ENCODE measurements at regions of chr9 and their contacts with region 1.

Region 1: DNA sequence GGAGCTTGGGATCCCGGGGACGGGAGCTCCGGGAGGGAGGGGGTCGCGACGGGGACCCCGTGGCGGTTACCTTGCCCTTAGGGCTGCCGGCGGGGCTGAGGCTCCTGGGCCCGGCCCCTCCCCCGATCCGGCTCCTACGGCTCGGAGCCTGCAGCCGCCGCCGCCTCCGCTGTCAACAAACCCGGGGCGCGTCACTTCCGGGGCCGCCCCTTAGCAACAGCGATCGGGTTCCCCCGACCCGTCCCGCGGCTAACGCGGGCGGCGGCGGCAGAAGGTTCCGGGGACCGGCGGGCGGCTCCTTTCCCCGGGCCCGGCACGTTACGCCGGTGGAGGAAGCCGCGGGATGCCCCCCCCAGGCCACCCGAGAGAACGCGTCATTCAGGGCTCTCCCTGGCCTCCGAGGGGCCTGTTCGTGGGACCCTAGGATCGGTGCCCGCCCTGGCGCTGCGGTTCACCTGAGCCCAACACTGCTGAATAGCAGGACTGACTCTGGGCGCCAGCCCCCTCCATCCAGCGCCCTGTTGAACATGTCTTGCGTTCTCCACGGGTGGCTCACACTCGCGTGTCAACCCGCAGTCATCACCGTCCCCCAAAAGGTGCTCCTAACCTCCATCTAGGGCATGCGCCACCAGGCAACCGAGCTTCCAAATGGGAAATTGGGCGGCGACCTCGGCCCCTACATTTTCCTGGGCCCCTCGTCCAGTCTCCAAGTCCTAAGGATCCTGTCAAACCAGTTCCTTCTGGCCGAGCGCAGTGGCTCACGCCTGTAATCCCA is at the start of gene ZER1:
- DNase-seq: peak; percentile 77 to 95
- H3K4me3 ChIP-seq: peak within 1 kb of the TSS; percentile 80
- H3K27ac ChIP-seq: peak within 1 kb of the TSS; percentile 74
- H3K4me1 ChIP-seq: peaks cover 11% of the 10 kb centered on the region; the same call in 1 of the 2 replicates
- H3K27me3 ChIP-seq: no peaks in the 10 kb centered on the region
- CTCF ChIP-seq: no peak
- total RNA-seq, gene ZER1: 65.2 and 70.0 TPM in 2 replicates

Region 2: DNA sequence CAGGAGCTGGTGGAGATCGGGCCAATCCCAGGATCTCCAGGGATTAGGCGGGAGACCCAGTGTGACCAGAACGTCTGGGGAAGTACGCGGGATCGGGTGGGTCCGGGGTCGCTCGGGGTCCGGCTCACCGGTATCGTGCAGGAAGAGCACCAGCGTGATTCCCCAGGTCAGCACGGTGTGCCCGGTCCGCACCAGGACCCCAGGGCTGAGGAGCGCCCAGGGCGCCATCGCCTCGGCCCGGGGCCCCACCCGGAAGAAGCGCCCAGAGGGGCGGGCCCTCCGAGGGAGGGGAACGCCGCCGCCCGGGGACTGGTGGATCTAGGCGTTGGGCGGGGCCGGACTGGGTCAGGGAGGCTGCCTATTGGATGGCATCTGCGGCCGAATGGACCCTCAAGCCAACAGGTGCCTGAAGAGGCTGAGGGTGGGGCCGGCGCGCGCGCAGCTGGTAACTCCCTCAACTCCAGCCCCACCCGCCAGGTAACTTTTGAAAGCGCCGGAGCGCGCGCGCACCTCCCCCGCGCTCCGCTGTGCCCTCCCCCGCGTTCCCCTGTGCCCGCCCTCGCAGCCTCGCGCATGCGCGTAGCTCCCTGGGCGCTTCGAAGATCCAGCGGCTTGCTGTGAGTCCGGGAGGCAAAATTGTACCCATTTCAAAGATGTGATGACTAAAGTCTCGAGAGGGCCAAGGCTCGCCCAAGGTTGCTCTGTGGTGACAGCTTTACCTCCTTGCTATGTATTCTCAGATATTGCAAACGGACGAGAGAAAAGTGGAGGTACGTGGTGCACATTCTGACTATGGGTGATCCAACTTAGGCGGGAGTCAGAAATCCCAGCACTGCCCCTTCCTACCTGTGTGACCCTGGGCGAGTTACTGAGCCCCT is 47.8 kb before region 1 on chr9 and contains the start of gene ZDHHC12:
- CTCF ChIA-PET with region 1: no interaction called
- POLR2A ChIA-PET with region 1: interaction called, 5 read pairs
- intact Hi-C with region 1: loop called (anchors 1 kb)
- DNase-seq: peak; percentile 95 to 100
- H3K4me3 ChIP-seq: peak within 1 kb of the TSS; percentile 80
- H3K27ac ChIP-seq: no peak within 1 kb of the TSS
- H3K4me1 ChIP-seq: no peaks in the 10 kb centered on the region
- H3K27me3 ChIP-seq: no peaks in the 10 kb centered on the region
- CTCF ChIP-seq: no peak
- total RNA-seq, gene ZDHHC12: 102 and 133 TPM in 2 replicates

Region 3: DNA sequence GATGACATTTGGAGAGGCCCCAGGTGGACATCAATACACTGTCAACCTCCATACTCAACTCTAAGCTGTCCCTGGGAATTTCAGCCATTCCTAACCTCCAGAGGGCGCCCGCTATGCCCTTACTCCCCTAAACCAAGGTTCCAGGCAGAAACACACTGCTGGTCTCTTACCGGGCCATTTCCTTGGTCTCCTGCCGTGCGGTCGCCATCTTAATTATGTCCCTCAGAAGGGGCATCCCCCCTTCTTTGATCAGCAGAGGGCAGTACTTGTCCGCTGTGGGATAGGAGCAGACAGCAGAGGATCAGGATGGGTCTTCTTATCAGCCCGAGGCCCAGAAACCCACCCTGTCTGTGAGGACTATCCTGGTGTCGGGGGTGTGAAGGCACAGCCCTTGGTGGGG is 38.7 kb before region 1 on chr9:
- CTCF ChIA-PET with region 1: interaction called, 4 read pairs
- POLR2A ChIA-PET with region 1: interaction called, 12 read pairs
- intact Hi-C with region 1: no loop called
- DNase-seq: peak in 1 of 2 experiments; percentile 64
- H3K4me3 ChIP-seq: no peak overlapping the region
- H3K27ac ChIP-seq: no peak overlapping the region
- H3K4me1 ChIP-seq: no peaks in the 10 kb centered on the region
- H3K27me3 ChIP-seq: no peaks in the 10 kb centered on the region
- CTCF ChIP-seq: peak; percentile 70

Region 4: DNA sequence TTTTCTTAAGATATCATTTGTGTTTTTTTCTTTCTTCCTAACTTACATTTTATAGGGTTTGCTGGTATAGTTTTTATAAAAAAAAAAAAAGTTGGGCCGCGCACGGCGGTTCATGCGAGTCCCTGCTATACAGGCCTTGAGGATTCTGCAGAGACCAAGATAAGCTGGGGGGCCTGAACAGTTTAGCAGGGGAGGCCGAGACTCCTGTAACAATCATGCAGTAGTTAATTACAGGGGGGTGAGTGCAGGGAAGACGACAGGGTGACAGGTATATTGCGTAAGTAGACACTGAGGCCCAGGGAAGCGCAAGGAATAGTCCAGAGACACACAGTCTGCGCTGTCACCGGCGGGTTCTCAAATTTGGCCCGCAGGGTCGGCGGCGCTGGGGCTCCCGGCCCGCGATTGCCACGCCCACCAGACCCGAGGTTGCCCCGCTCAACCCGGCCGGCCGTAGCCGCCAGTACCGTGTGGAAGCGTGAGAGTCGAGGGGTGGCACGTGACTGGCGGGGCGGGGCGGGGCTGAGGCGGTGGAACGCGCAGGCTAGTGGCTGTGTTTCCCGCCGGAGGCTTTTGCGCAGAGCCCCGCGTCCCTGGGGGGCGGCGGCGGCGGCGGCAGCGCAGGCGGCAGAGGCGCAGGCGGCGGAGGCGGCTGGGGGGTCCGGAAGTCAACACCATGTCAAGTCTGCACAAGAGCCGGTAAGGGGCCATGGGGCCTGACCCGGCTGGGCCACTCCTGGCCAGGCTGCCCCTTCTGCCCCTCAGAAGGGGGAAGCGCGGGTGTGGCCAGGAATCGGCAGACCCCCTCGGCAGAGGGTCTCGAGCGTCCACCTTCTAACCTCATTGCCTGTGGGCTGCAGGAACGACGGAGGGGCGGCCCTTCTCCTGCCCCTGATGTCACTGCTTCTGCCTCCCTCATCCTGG is 15.0 kb after region 1 on chr9 and contains the start of gene TBC1D13:
- CTCF ChIA-PET with region 1: no interaction called
- POLR2A ChIA-PET with region 1: no interaction called
- intact Hi-C with region 1: loop called (anchors 1 kb)
- DNase-seq: peak; percentile 71 to 88
- H3K4me3 ChIP-seq: peak within 1 kb of the TSS; percentile 96
- H3K27ac ChIP-seq: peak within 1 kb of the TSS; percentile 43
- H3K4me1 ChIP-seq: peaks cover 16% of the 10 kb centered on the region
- H3K27me3 ChIP-seq: no peaks in the 10 kb centered on the region
- CTCF ChIP-seq: no peak
- total RNA-seq, gene TBC1D13: 38.2 and 41.9 TPM in 2 replicates

Region 5: GRCh38 chr9:128892317-128892921 is 120.5 kb after region 1 on chr9:
- CTCF ChIA-PET with region 1: no interaction called
- POLR2A ChIA-PET with region 1: interaction called, 17 read pairs
- intact Hi-C with region 1: no loop called
- DNase-seq: peak; percentile 94 to 99
- H3K4me3 ChIP-seq: peak overlapping the region; percentile 31; the same call in 1 of the 2 replicates
- H3K27ac ChIP-seq: peak overlapping the region; percentile 79
- H3K4me1 ChIP-seq: peaks cover 26% of the 10 kb centered on the region
- H3K27me3 ChIP-seq: no peaks in the 10 kb centered on the region
- CTCF ChIP-seq: no peak

Region 6: GRCh38 chr9:129166623-129167557 is 395.0 kb after region 1 on chr9:
- CTCF ChIA-PET with region 1: no interaction called
- POLR2A ChIA-PET with region 1: no interaction called
- intact Hi-C with region 1: no loop called
- DNase-seq: peak; percentile 89 to 90
- H3K4me3 ChIP-seq: peak overlapping the region; percentile 56; the same call in 1 of the 2 replicates
- H3K27ac ChIP-seq: peak overlapping the region; percentile 90
- H3K4me1 ChIP-seq: peaks cover 43% of the 10 kb centered on the region
- H3K27me3 ChIP-seq: no peaks in the 10 kb centered on the region
- CTCF ChIP-seq: no peak

Region 7: DNA sequence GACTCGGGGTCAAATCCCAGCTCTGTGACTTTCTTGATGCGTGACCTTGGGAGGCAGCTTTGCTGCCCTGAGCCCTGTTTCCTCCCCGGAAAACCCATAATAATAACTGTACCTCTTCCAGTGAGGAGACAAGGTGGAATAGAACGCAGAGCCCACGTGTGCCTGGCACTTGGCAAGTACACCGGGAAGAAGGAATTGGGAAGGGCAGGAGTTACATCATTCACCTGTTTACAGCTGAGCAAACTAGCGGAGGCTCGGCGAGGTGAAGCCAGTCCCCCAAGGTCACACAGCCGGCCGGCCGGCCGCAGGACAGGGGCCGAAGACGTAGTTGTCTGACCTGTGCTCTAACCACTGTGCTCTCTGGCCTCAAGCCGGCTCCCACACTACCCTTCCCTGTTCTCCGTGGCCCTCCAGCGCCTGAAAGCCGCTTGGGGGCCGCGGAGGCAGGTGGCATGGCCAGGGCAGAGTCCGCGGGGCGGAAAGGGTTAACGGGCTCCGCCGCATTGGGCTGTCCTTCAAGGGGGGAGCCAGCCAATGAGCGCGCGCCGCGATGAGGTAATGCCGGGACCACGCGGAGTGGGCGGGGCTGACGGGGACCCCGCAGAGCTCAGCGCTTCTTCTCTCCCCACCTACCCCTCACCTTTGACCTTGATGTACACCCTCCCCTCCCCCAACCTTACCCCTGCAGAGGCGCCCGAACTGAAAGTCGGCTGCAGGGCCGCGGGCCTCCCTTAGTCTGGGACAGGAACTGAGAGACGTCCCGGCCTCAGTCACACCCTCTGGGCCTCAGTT is 723.8 kb after region 1 on chr9:
- CTCF ChIA-PET with region 1: no interaction called
- POLR2A ChIA-PET with region 1: interaction called, 13 read pairs
- intact Hi-C with region 1: no loop called
- DNase-seq: peak; percentile 78 to 95
- H3K4me3 ChIP-seq: peak overlapping the region; percentile 60
- H3K27ac ChIP-seq: peak overlapping the region; percentile 64
- H3K4me1 ChIP-seq: peaks cover 52% of the 10 kb centered on the region
- H3K27me3 ChIP-seq: no peaks in the 10 kb centered on the region
- CTCF ChIP-seq: no peak